Spleen (tissue), 13 donors: ENCODE measurements at regions of chr20 and their contacts with region 1.

Region 1: DNA sequence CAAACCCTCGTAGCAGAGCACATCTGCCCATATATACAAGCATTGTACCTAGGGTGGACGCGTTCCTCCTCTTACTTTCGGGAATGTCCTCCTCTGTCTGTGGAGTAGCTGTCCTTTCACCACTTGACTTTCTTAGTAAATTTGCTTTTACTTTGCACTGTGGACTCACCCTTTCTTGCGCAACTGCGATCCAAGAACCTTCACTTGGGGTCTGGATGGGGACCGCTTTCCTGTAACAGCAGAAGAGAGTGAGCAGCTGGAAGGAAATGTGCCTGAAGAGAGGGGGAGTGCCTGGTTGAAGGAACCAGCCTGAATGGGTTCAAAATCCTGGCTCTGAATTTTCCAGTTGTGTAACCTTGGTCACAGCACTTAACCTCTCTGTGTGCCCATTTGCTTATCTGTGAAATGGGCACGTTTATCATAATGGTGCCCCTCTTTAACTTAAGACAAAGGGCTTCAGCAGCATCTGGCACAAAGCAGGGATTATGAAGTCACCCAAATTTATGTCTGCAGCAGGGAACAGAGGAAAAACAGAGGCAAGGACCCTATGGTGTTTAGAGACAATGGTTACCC is 40.1 kb upstream of the PMEPA1 start:
- DNase-seq: no peak
- H3K4me3 ChIP-seq: no peak overlapping the region
- H3K27ac ChIP-seq: peak overlapping the region; percentile 22 to 87 (median 80)
- H3K4me1 ChIP-seq: peaks cover 13 to 50% (median 34%) of the 10 kb centered on the region in 6 donors
- H3K27me3 ChIP-seq: peaks cover 0 to 33% (median 0%) of the 10 kb centered on the region in 7 donors
- CTCF ChIP-seq: no peak
- POLR2A ChIP-seq: no peak

Region 2: GRCh38 chr20:57709931-57710799 is 39.8 kb before region 1 on chr20 and contains the start of gene PMEPA1:
- intact Hi-C with region 1: no loop called
- DNase-seq: peak; percentile 95
- H3K4me3 ChIP-seq: peak within 1 kb of the TSS; percentile 64 to 82 (median 72)
- H3K27ac ChIP-seq: peak within 1 kb of the TSS; percentile 75 to 92 (median 87)
- H3K4me1 ChIP-seq: peaks cover 14 to 79% (median 46%) of the 10 kb centered on the region in 6 donors
- H3K27me3 ChIP-seq: peaks cover 0 to 34% (median 2%) of the 10 kb centered on the region in 7 donors
- CTCF ChIP-seq: peak in 6 of 11 experiments; percentile 6 to 43 (median 29)
- POLR2A ChIP-seq: peak in 1 of 3 donors; percentile 67
- total RNA-seq, gene PMEPA1: 7.3 to 15.7 (median 10.9) TPM

Region 3: GRCh38 chr20:57791966-57792365 is 42.0 kb after region 1 on chr20:
- intact Hi-C with region 1: loop called (anchors 2 kb)
- DNase-seq: peak; percentile 32
- H3K4me3 ChIP-seq: no peak overlapping the region
- H3K27ac ChIP-seq: no peak overlapping the region
- H3K4me1 ChIP-seq: peaks cover 0 to 25% (median 2%) of the 10 kb centered on the region in 6 donors
- H3K27me3 ChIP-seq: no peaks in the 10 kb centered on the region
- CTCF ChIP-seq: no peak
- POLR2A ChIP-seq: no peak